ENCODE measurements at regions of chr6 and their contacts with region 1.

Region 1: DNA sequence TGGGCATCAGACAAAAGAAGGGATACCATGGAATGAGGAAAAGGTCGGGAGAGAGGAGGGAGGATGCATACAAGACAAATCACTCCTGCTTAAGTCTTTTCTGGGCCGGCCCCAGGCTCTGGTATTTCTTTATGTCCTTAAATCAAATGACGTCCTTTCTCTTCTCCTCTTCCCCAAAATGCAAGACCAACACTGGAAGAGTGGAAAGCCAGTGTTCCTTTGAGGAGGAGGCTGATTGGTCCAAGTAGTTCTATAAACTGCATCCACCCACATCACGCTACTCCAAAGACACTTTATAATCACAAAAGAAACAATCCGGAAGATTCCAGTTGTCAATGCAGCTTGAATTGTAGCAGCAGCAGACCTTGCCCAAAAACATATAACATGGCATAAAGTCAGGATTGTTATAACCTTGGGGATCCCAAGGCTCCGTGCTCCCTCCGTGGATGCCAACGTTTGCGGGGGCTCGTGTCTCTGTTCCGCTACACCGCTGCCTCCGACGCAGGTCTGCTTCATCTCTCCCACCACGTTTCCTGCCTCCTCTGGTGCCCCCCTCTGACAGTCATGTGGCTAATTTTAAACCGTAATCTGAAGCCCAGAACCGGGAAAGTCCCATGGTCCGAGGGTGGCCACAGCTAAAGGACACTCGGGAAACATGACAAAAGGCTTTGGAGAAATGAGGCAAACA is 47.1 kb downstream of the MCUR1 start:
- DNase-seq: peak; percentile 61 to 75
- H3K4me3 ChIP-seq: peak overlapping the region; percentile 25 to 37
- H3K27ac ChIP-seq: peak overlapping the region; percentile 50 to 59
- H3K4me1 ChIP-seq: no peaks in the 10 kb centered on the region
- H3K27me3 ChIP-seq: no peaks in the 10 kb centered on the region
- CTCF ChIP-seq: peak; percentile 53 to 58 (median 54)
- POLR2A ChIP-seq: no peak

Region 2: DNA sequence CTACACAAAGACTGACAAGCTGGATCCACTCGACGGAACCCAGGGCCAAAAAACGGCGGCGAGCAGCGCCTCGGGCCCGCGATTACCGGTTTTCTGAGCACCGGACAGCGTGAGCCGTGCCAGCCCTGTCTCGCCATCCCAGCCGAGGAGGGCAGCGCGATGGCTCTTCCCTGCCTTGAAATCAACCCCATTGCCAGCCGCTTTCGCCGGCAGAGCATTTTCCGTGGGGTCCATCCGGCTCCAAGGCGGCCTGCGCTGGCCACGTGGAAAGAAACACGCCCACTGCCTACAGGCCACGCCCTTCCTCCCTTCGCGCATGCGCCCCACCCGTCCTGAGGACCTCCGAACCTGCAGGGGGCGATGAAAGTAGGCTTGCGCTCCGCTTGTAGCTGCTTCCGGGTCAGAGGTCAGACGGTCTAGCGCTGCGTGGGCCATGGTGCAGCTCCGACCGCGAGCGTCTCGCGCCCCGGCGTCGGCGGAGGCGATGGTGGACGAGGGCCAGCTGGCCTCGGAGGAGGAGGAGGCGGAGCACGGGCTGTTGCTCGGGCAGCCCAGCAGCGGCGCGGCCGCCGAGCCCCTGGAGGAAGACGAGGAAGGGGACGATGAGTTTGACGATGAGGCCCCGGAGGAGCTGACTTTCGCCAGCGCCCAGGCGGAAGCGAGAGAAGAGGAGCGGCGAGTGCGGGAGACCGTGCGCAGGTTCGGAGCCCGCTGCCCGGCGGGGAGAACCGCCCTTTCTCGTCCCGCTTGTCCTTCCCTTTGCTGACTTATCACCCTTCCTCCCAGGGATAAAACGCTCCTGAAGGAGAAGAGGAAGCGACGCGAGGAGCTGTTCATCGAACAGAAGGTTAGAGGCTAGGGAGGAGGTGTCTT is 152.1 kb before region 1 on chr6 and contains the start of gene NOL7:
- intact Hi-C with region 1: loop called (anchors 10 kb)
- DNase-seq: peak; percentile 97 to 98
- H3K4me3 ChIP-seq: peak within 1 kb of the TSS; percentile 60 to 85
- H3K27ac ChIP-seq: peak within 1 kb of the TSS; percentile 81 to 90
- H3K4me1 ChIP-seq: peaks cover 0 to 4% of the 10 kb centered on the region in 2 donors
- H3K27me3 ChIP-seq: no peaks in the 10 kb centered on the region
- CTCF ChIP-seq: peak; percentile 86 to 98 (median 96)
- POLR2A ChIP-seq: peak; percentile 67 to 85
- total RNA-seq, gene NOL7: 49.4 to 64.7 (median 55.7) TPM

Region 3: DNA sequence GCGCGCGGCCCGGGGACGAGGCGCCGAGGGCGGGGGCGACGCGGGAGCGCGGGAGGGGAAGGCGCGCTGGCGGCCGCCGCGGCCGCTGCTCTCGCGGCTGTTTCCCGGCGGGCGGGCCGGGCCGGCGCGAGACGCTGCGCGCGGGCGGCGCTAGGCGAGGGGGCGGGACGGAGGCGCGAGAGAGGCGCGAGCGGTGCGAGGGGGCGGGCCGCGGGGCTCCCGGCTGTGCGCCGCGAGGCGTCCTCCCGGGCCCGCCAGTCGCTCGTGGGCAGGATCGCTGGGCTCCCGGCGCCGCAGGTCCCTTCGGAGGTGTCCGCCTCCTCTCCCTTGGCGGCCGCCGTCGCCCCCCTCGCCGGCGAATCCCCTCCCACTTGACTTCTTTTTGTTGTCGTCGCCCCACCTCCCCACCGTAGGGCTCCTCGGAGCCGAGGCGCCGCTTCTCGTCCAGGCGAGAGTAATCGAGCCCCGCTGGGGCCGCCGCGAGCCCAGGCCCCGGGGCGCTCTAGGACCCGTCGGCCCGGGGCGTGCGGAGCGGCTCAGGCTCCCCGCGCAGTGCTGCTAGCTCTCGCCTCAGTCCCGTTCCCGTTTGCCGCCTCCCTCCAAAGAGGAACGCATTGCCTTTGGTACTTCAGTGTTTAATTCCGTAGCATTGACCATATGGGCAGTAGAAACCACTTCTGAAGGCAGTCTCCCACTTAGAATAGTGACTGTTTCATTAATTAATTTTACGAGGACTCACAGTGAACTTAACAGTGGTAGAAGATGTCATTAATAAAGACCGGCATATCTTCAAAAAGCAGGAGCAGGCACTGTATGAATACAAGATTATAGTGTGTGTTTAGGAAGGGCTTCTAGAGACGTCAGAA is 55.3 kb before region 1 on chr6 and contains the start of gene RANBP9:
- intact Hi-C with region 1: loop called (anchors 10 kb)
- DNase-seq: peak; percentile 89
- H3K4me3 ChIP-seq: peak within 1 kb of the TSS; percentile 47 to 54
- H3K27ac ChIP-seq: peak within 1 kb of the TSS; percentile 97 to 98
- H3K4me1 ChIP-seq: no peaks in the 10 kb centered on the region
- H3K27me3 ChIP-seq: no peaks in the 10 kb centered on the region
- CTCF ChIP-seq: no peak
- POLR2A ChIP-seq: peak; percentile 57 to 85
- total RNA-seq, gene RANBP9: 22.6 to 49.0 (median 40.9) TPM